Testis (tissue), 5 donors: ENCODE measurements at regions of chr2 and their contacts with region 1.

Region 1: GRCh38 chr2:16608661-16609643 is 56.7 kb downstream of the CYRIA start:
- DNase-seq: peak; percentile 90
- H3K4me3 ChIP-seq: peak overlapping the region; percentile 34 to 56
- H3K27ac ChIP-seq: no peak overlapping the region
- H3K4me1 ChIP-seq: no peaks in the 10 kb centered on the region
- H3K27me3 ChIP-seq: no peaks in the 10 kb centered on the region
- CTCF ChIP-seq: peak; percentile 88 to 95 (median 93)
- POLR2A ChIP-seq: no peak

Region 2: DNA sequence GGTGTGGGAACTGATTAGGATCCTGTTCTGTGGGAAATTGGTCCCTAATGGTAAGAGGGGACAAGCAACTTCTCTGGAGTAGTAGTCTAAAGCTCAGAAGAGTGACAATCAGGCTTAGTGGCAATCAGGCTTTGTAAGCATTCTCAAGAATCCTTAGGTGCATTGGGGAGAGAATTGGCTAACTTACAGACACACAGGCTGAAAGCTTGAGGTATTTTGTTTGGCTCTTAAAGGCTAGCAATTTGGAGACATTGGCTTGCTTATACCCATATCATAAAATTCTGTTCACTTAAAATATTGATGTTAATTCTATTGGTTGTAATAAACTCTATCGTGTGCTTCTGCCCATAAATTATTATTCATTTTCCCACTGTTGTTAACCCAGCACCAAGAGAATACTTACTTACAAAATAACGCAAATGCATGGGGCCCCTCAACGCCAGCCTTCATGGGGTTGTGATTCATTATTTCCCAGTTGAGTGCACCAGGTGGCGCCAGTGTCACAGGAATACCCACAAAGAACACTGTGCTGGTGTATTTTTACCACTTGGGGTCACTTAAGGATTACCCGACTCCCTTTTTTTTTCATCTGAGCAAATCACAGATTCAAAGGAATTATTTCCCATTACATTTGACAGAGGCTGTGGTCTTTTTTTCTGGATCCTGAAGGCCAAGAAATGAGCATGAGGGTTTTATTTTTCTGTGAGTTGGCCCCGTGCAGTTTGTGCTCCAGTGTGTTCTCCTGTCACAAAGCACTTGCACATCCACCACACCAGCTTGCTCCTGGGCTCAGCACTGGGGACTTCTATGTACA is 971.8 kb before region 1 on chr2:
- intact Hi-C with region 1: loop called (anchors 10 kb)
- DNase-seq: peak; percentile 83
- H3K4me3 ChIP-seq: no peak overlapping the region
- H3K27ac ChIP-seq: no peak overlapping the region
- H3K4me1 ChIP-seq: no peaks in the 10 kb centered on the region
- H3K27me3 ChIP-seq: no peaks in the 10 kb centered on the region
- CTCF ChIP-seq: peak; percentile 84 to 94 (median 91)
- POLR2A ChIP-seq: no peak

Region 3: DNA sequence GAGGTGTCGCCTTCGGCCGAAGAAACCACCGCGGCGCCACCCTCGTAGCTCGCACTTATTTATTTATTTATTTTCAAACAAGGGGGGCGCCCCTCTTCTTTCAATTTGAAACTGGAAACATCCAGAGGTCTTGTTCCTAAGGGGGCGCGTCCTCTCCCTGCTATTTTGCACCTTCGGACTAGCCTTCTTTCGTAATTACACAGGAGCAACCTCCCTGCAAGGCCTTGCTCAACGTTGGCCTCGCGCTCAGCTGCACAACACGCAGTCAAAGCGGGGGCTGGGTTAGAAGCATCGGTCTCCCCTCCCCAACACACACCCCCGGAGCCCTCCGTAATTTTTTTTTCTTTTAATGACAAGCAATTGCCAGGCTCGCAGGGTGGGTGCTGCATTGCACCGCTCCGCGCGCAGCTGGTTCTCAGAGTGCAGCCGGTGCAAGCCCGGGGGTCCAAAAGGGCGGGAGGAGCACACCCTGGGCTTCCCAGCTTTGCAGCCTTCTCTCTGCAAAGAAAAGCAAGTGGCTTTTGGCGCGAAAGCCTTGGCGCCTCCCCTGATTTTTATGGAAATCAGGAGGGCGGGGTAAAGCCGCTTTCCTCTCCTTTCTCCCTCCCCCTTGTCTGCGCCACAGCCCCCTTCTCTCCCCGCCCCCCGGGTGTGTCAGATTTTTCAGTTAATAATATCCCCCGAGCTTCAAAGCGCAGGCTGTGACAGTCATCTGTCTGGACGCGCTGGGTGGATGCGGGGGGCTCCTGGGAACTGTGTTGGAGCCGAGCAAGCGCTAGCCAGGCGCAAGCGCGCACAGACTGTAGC is 668.9 kb before region 1 on chr2 and contains the start of gene MYCN:
- intact Hi-C with region 1: loop called (anchors 10 kb)
- DNase-seq: peak; percentile 79
- H3K4me3 ChIP-seq: peak within 1 kb of the TSS; percentile 39 to 62
- H3K27ac ChIP-seq: no peak within 1 kb of the TSS
- H3K4me1 ChIP-seq: peaks cover 40% of the 10 kb centered on the region
- H3K27me3 ChIP-seq: no peaks in the 10 kb centered on the region
- CTCF ChIP-seq: no peak
- POLR2A ChIP-seq: no peak
- total RNA-seq, gene MYCN: 6.9 TPM

Region 4: GRCh38 chr2:16756831-16757644 is 148.1 kb after region 1 on chr2:
- intact Hi-C with region 1: loop called (anchors 5 kb)
- DNase-seq: peak; percentile 84
- H3K4me3 ChIP-seq: no peak overlapping the region
- H3K27ac ChIP-seq: no peak overlapping the region
- H3K4me1 ChIP-seq: peaks cover 5% of the 10 kb centered on the region
- H3K27me3 ChIP-seq: no peaks in the 10 kb centered on the region
- CTCF ChIP-seq: peak; percentile 93
- POLR2A ChIP-seq: no peak

Region 5: GRCh38 chr2:16900405-16901025 is 291.6 kb after region 1 on chr2:
- intact Hi-C with region 1: no loop called
- DNase-seq: peak; percentile 22
- H3K4me3 ChIP-seq: no peak overlapping the region
- H3K27ac ChIP-seq: no peak overlapping the region
- H3K4me1 ChIP-seq: no peaks in the 10 kb centered on the region
- H3K27me3 ChIP-seq: no peaks in the 10 kb centered on the region
- CTCF ChIP-seq: peak in 1 of 3 experiments; percentile 24
- POLR2A ChIP-seq: no peak